Activated B cell treated with CpG ODN at 0.5 μM for 24 hours (primary cell): ENCODE measurements at regions of chr5 and their contacts with region 1.

Region 1: DNA sequence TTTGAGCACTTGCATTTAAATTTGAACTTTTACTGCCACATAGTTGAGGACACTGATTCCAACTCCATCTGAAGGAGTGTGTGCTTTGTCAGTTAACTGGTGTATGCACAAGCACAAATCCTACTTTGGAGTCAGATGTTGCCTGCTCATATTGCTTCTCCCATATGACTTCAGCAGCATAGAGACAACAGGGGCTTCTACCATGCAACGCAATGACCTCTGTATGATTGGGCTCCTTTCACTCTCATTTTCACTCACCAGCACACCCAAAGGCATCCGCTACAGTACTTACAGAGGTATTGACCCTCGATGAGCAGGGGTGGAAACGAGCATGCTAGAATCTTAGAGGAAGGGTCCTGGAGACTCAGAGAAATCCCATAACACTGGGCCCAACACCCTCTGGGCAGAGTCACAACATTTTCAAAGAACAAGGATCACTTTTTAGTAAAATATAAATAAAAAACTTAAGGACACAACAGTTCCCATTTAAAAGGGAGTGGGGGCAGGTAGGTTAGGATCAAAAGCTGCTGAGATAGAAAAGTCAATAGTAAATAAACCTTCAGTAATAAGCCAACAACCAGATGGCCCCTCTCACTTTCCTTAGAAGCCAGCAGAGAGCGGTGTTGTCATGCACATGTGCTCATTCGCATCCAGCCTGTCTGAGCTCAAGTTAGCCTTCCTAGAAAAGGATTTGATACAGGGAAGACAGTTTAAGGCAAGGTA is 203.8 kb downstream of the SNCAIP start:
- DNase-seq: peak; percentile 17
- ATAC-seq: peak; percentile 79
- H3K4me3 Mint-ChIP-seq: no peak overlapping the region
- H3K27ac Mint-ChIP-seq: no peak overlapping the region
- H3K4me1 Mint-ChIP-seq: peaks cover 8% of the 10 kb centered on the region
- H3K27me3 Mint-ChIP-seq: peaks cover 2% of the 10 kb centered on the region
- CTCF ChIP-seq: no peak

Region 2: GRCh38 chr5:122192497-122193496 is 323.1 kb before region 1 on chr5:
- CTCF ChIA-PET with region 1: interaction called, 3 read pairs
- POLR2A ChIA-PET with region 1: no interaction called
- intact Hi-C with region 1: loop called (anchors 5 kb)
- DNase-seq: no peak
- ATAC-seq: peak; percentile 42
- H3K4me3 Mint-ChIP-seq: no peak overlapping the region
- H3K27ac Mint-ChIP-seq: no peak overlapping the region
- H3K4me1 Mint-ChIP-seq: no peaks in the 10 kb centered on the region
- H3K27me3 Mint-ChIP-seq: peaks cover 17% of the 10 kb centered on the region
- CTCF ChIP-seq: no peak

Region 3: GRCh38 chr5:122896598-122897282 is 380.9 kb after region 1 on chr5:
- CTCF ChIA-PET with region 1: interaction called, 5 read pairs
- POLR2A ChIA-PET with region 1: no interaction called
- intact Hi-C with region 1: loop called (anchors 2 kb)
- DNase-seq: no peak
- ATAC-seq: no peak
- H3K4me3 Mint-ChIP-seq: no peak overlapping the region
- H3K27ac Mint-ChIP-seq: no peak overlapping the region
- H3K4me1 Mint-ChIP-seq: no peaks in the 10 kb centered on the region
- H3K27me3 Mint-ChIP-seq: no peaks in the 10 kb centered on the region
- CTCF ChIP-seq: no peak

Region 4: GRCh38 chr5:122999945-123000563 is 484.2 kb after region 1 on chr5:
- CTCF ChIA-PET with region 1: interaction called, 9 read pairs
- POLR2A ChIA-PET with region 1: no interaction called
- intact Hi-C with region 1: loop called (anchors 1 kb)
- DNase-seq: peak; percentile 37
- ATAC-seq: peak; percentile 70
- H3K4me3 Mint-ChIP-seq: no peak overlapping the region
- H3K27ac Mint-ChIP-seq: no peak overlapping the region
- H3K4me1 Mint-ChIP-seq: no peaks in the 10 kb centered on the region
- H3K27me3 Mint-ChIP-seq: no peaks in the 10 kb centered on the region
- CTCF ChIP-seq: peak; percentile 47

Region 5: DNA sequence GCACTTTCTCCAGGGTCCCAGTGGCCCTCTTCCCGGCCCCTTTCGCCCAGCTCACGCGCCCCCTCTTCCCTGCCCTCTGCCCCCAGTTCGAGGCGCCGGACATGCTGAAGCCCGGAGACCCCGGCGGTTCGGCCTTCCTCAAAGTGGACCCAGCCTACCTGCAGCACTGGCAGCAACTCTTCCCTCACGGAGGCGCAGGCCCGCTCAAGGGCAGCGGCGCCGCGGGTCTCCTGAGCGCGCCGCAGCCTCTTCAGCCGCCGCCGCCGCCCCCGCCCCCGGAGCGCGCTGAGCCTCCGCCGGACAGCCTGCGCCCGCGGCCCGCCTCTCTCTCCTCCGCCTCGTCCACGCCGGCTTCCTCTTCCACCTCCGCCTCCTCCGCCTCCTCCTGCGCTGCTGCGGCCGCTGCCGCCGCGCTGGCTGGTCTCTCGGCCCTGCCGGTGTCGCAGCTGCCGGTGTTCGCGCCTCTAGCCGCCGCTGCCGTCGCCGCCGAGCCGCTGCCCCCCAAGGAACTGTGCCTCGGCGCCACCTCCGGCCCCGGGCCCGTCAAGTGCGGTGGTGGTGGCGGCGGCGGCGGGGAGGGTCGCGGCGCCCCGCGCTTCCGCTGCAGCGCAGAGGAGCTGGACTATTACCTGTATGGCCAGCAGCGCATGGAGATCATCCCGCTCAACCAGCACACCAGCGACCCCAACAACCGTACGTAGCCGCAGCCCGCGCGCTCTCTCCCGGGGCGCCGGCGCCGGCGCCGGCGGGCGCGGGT is 574.2 kb after region 1 on chr5:
- CTCF ChIA-PET with region 1: no interaction called
- POLR2A ChIA-PET with region 1: no interaction called
- intact Hi-C with region 1: loop called (anchors 10 kb)
- DNase-seq: no peak
- ATAC-seq: peak; percentile 31
- H3K4me3 Mint-ChIP-seq: peak overlapping the region; percentile 41
- H3K27ac Mint-ChIP-seq: no peak overlapping the region
- H3K4me1 Mint-ChIP-seq: peaks cover 50% of the 10 kb centered on the region
- H3K27me3 Mint-ChIP-seq: peaks cover 67% of the 10 kb centered on the region
- CTCF ChIP-seq: no peak

Region 6: GRCh38 chr5:123150089-123150488 is 634.2 kb after region 1 on chr5:
- CTCF ChIA-PET with region 1: no interaction called
- POLR2A ChIA-PET with region 1: no interaction called
- intact Hi-C with region 1: no loop called
- DNase-seq: no peak
- ATAC-seq: no peak
- H3K4me3 Mint-ChIP-seq: no peak overlapping the region
- H3K27ac Mint-ChIP-seq: no peak overlapping the region
- H3K4me1 Mint-ChIP-seq: no peaks in the 10 kb centered on the region
- H3K27me3 Mint-ChIP-seq: peaks cover 11% of the 10 kb centered on the region
- CTCF ChIP-seq: no peak

Region 7: DNA sequence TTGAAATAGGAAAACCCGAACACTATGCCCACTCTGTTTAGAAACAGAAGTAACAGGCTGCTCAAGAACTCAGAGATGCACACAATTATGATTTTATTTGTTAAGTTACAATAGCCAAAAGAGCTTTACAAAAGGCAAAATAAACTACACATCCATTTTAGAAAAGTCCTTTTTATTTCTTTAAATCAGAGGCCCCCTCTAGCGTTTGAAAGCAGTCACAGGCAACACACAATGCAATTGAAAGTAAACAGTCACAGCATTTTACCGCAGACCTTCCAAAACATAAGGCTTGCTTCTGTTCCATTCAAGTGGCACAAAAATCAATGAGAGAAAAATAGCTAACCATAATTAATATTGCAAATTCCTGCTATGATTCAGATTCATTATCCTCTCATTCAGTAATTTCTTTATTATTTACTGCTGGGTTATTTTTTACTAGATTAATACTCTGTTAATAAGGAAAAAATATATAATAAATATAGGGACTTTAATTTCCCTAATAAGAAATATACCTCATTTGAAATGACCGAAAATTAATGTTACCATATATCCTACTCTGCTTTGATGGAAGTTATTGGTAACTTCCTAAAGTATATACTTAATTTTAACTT is 829.1 kb after region 1 on chr5:
- CTCF ChIA-PET with region 1: interaction called, 11 read pairs
- POLR2A ChIA-PET with region 1: no interaction called
- intact Hi-C with region 1: loop called (anchors 1 kb)
- DNase-seq: no peak
- ATAC-seq: no peak
- H3K4me3 Mint-ChIP-seq: no peak overlapping the region
- H3K27ac Mint-ChIP-seq: no peak overlapping the region
- H3K4me1 Mint-ChIP-seq: peaks cover 12% of the 10 kb centered on the region
- H3K27me3 Mint-ChIP-seq: no peaks in the 10 kb centered on the region
- CTCF ChIP-seq: no peak

Region 8: GRCh38 chr5:123371575-123372179 is 855.8 kb after region 1 on chr5:
- CTCF ChIA-PET with region 1: interaction called, 26 read pairs
- POLR2A ChIA-PET with region 1: no interaction called
- intact Hi-C with region 1: loop called (anchors 1 kb)
- DNase-seq: peak; percentile 21
- ATAC-seq: no peak
- H3K4me3 Mint-ChIP-seq: no peak overlapping the region
- H3K27ac Mint-ChIP-seq: no peak overlapping the region
- H3K4me1 Mint-ChIP-seq: no peaks in the 10 kb centered on the region
- H3K27me3 Mint-ChIP-seq: no peaks in the 10 kb centered on the region
- CTCF ChIP-seq: peak; percentile 31